ENCODE measurements at regions of chr11 and their contacts with region 1.

Region 1: GRCh38 chr11:26078217-26078821 is 253.6 kb upstream of the ANO3 start:
- DNase-seq: no peak
- H3K4me3 ChIP-seq: no peak overlapping the region
- H3K27ac ChIP-seq: no peak overlapping the region
- H3K27me3 ChIP-seq: peaks cover 0 to 4% (median 0%) of the 10 kb centered on the region in 45 donors
- CTCF ChIP-seq: no peak

Region 2: GRCh38 chr11:26127336-26127735 is 49.0 kb after region 1 on chr11:
- intact Hi-C with region 1: loop called in 1 of 2 experiments (anchors 5 kb)
- DNase-seq: no peak
- H3K4me3 ChIP-seq: no peak overlapping the region
- H3K27ac ChIP-seq: no peak overlapping the region
- H3K27me3 ChIP-seq: no peaks in the 10 kb centered on the region
- CTCF ChIP-seq: no peak

Measured in dorsolateral prefrontal cortex (tissue), 120 donors.